CD14-positive monocyte (primary cell): ENCODE measurements at regions of chr1 and their contacts with region 1.

Region 1: GRCh38 chr1:15820478-15820877 is 13.0 kb upstream of the UQCRHL start:
- DNase-seq: no peak
- H3K4me3 ChIP-seq: no peak overlapping the region
- H3K4me3 Mint-ChIP-seq: no peak overlapping the region
- H3K27ac ChIP-seq: no peak overlapping the region
- H3K27ac Mint-ChIP-seq: no peak overlapping the region
- H3K4me1 ChIP-seq: peaks cover 14 to 22% of the 10 kb centered on the region in 2 donors
- H3K4me1 Mint-ChIP-seq: peaks cover 10% of the 10 kb centered on the region
- H3K27me3 ChIP-seq: no peaks in the 10 kb centered on the region
- H3K27me3 Mint-ChIP-seq: peaks cover 0 to 2% (median 0%) of the 10 kb centered on the region in 3 donors
- CTCF ChIP-seq: no peak

Region 2: GRCh38 chr1:15757575-15758393 is 62.7 kb before region 1 on chr1:
- intact Hi-C with region 1: no loop called
- DNase-seq: no peak
- H3K4me3 ChIP-seq: no peak overlapping the region
- H3K4me3 Mint-ChIP-seq: peak overlapping the region in 1 of 2 donors; percentile 73
- H3K27ac ChIP-seq: no peak overlapping the region
- H3K27ac Mint-ChIP-seq: peak overlapping the region in 2 of 7 donors; percentile 50 to 72
- H3K4me1 ChIP-seq: no peaks in the 10 kb centered on the region
- H3K4me1 Mint-ChIP-seq: peaks cover 15% of the 10 kb centered on the region
- H3K27me3 ChIP-seq: peaks cover 30 to 63% of the 10 kb centered on the region in 2 donors
- H3K27me3 Mint-ChIP-seq: peaks cover 70 to 82% (median 73%) of the 10 kb centered on the region in 3 donors
- CTCF ChIP-seq: no peak

Region 3: GRCh38 chr1:15863156-15863901 is 42.9 kb after region 1 on chr1:
- intact Hi-C with region 1: loop called in 1 of 2 experiments (anchors 5 kb)
- DNase-seq: no peak
- H3K4me3 ChIP-seq: no peak overlapping the region
- H3K4me3 Mint-ChIP-seq: no peak overlapping the region
- H3K27ac ChIP-seq: no peak overlapping the region
- H3K27ac Mint-ChIP-seq: peak overlapping the region in 2 of 7 donors; percentile 59 to 73
- H3K4me1 ChIP-seq: peaks cover 7 to 13% of the 10 kb centered on the region in 2 donors
- H3K4me1 Mint-ChIP-seq: peaks cover 34% of the 10 kb centered on the region
- H3K27me3 ChIP-seq: no peaks in the 10 kb centered on the region
- H3K27me3 Mint-ChIP-seq: peaks cover 0 to 4% (median 1%) of the 10 kb centered on the region in 3 donors
- CTCF ChIP-seq: no peak

Region 4: GRCh38 chr1:15966081-15966955 is 145.8 kb after region 1 on chr1:
- intact Hi-C with region 1: no loop called
- DNase-seq: peak; percentile 91 to 95 (median 92)
- H3K4me3 ChIP-seq: peak overlapping the region in 1 of 3 experiments; percentile 19
- H3K4me3 Mint-ChIP-seq: peak overlapping the region; percentile 9 to 14
- H3K27ac ChIP-seq: peak overlapping the region; percentile 81 to 93
- H3K27ac Mint-ChIP-seq: peak overlapping the region; percentile 81 to 97 (median 87)
- H3K4me1 ChIP-seq: peaks cover 23 to 38% of the 10 kb centered on the region in 2 donors
- H3K4me1 Mint-ChIP-seq: peaks cover 39% of the 10 kb centered on the region
- H3K27me3 ChIP-seq: no peaks in the 10 kb centered on the region
- H3K27me3 Mint-ChIP-seq: peaks cover 0 to 2% (median 0%) of the 10 kb centered on the region in 3 donors
- CTCF ChIP-seq: no peak